Activated naive CD4-positive, alpha-beta T cell treated with anti-CD3 and anti-CD28 coated beads for 36 hours (primary cell): ENCODE measurements at regions of chr13 and their contacts with region 1.

Region 1: GRCh38 chr13:113208424-113209335 is at the start of gene PCID2:
- DNase-seq: peak; percentile 89
- H3K4me3 Mint-ChIP-seq: peak within 1 kb of the TSS; percentile 77
- H3K27ac Mint-ChIP-seq: peak within 1 kb of the TSS; percentile 81
- H3K4me1 Mint-ChIP-seq: peaks cover 55% of the 10 kb centered on the region
- H3K27me3 Mint-ChIP-seq: no peaks in the 10 kb centered on the region
- total RNA-seq, gene PCID2: 63.5 to 67.1 TPM

Region 2: GRCh38 chr13:112942689-112943308 is 265.9 kb before region 1 on chr13:
- CTCF ChIA-PET with region 1: no interaction called
- intact Hi-C with region 1: loop called (anchors 1 kb)
- DNase-seq: peak; percentile 99
- H3K4me3 Mint-ChIP-seq: peak overlapping the region; percentile 81
- H3K27ac Mint-ChIP-seq: no peak overlapping the region
- H3K4me1 Mint-ChIP-seq: peaks cover 7% of the 10 kb centered on the region
- H3K27me3 Mint-ChIP-seq: peaks cover 5% of the 10 kb centered on the region

Region 3: GRCh38 chr13:113138792-113139551 is 69.7 kb before region 1 on chr13:
- CTCF ChIA-PET with region 1: no interaction called
- intact Hi-C with region 1: no loop called
- DNase-seq: no peak
- H3K4me3 Mint-ChIP-seq: no peak overlapping the region
- H3K27ac Mint-ChIP-seq: no peak overlapping the region
- H3K4me1 Mint-ChIP-seq: no peaks in the 10 kb centered on the region
- H3K27me3 Mint-ChIP-seq: no peaks in the 10 kb centered on the region

Region 4: DNA sequence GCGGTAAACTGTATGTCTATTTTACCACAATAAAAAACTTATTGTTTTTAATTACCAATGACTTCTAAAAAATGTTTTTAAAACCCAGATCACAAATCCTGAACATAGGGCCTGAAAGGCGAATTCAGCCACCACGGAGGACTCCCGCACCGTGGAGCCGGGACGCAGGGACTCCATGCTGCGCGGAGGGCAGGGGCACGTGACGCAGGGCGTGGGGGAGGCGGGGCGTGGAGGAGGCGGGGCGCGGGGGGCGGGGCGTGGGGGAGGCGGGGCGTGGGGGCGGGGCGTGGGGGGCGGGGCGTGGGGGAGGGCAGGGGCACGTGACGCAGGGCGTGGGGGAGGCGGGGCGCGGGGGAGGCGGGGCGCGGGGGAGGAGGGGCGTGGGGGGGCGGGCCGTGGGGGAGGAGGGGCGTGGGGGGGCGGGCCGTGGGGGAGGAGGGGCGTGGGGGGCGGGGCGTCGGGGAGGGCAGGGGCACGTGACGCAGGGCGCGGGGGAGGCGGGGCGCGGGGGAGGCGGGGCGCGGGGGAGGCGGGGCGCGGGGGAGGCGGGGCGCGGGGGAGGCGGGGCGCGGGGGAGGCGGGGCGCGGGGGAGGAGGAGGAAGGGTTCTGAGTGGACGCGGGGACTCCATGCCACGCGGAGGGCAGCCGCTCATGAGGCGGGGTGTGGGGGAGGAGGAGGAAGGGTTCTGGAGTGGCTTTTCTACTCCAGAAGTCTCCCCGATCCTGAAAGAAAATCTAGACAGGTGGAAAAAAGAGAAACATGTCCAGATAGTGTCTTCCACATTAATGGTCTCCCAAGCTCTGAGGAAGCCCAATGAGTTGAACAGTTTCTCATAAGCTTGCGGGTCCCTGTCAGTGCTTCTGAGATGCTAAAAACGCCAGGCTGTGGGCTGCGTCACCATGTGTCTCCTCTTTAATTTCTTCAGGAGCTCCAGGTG is 54.6 kb before region 1 on chr13:
- CTCF ChIA-PET with region 1: no interaction called
- intact Hi-C with region 1: loop called (anchors 1 kb)
- DNase-seq: peak; percentile 68
- H3K4me3 Mint-ChIP-seq: peak overlapping the region; percentile 71
- H3K27ac Mint-ChIP-seq: peak overlapping the region; percentile 10
- H3K4me1 Mint-ChIP-seq: peaks cover 17% of the 10 kb centered on the region
- H3K27me3 Mint-ChIP-seq: peaks cover 4% of the 10 kb centered on the region

Region 5: GRCh38 chr13:113283904-113284303 is 75.2 kb after region 1 on chr13:
- CTCF ChIA-PET with region 1: no interaction called
- intact Hi-C with region 1: no loop called
- DNase-seq: no peak
- H3K4me3 Mint-ChIP-seq: no peak overlapping the region
- H3K27ac Mint-ChIP-seq: no peak overlapping the region
- H3K4me1 Mint-ChIP-seq: no peaks in the 10 kb centered on the region
- H3K27me3 Mint-ChIP-seq: peaks cover 7% of the 10 kb centered on the region

Region 6: DNA sequence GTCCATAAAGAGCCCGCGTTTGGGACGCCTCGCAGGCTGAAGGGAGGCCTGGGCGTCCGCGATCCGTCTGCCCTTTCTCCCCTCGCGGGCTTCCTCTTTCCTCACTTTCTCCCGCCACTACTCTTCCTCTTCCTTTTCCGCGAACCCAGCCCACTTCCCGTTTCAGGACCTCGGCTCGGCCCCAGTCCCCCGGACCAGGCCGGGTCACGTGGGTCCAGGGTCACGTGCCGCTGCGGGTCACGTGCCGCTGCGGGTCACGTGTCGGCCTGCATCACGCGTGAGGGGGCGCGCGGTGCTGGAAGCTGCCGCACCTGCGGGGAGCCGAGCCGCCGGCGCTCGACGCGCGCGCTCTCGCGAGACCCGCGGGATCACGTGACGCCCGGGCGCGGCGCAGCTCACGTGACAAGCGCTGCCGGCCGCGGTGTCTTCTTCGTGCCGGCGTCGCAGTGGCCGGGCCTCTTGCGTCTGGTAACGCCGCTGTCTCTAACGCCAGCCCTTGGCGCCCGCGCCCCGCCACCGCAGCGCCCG is 88.2 kb after region 1 on chr13 and contains the start of gene LAMP1:
- CTCF ChIA-PET with region 1: interaction called, 3 read pairs
- intact Hi-C with region 1: loop called (anchors 1 kb)
- DNase-seq: peak; percentile 97
- H3K4me3 Mint-ChIP-seq: peak within 1 kb of the TSS; percentile 91
- H3K27ac Mint-ChIP-seq: peak within 1 kb of the TSS; percentile 96
- H3K4me1 Mint-ChIP-seq: peaks cover 32% of the 10 kb centered on the region
- H3K27me3 Mint-ChIP-seq: peaks cover 10% of the 10 kb centered on the region
- total RNA-seq, gene LAMP1: 33.5 to 33.7 TPM

Region 7: DNA sequence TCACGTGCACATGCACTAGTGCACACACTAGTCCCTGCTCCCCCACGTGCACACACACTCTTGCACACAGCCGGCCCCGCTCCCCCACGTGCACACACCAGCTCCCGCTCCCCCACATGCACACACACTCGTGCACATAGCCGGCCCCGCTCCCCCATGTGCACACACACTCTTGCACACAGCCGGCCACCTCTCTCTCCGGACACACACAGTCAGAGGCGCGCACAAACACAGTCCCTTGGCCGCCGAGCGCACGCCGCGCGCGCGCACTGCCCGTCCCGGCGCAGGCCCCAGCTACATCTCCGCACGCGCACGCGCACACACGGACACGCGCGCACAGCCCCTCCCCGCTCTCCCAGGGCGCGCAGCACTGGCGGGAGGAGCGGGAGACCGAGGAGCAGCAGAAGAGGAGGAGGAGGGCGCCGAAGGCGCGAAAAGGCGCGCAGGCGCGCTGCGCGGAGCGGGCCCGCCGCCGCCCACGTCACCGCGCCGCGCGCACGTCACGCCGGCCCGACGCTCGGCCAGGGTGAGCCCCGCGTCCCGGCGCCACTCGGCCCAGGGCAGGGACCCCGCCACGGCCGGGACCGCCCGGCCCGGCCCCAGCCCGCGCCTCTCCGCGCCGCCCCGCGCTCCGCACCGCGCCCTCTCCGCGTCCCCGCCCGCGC is 375.7 kb after region 1 on chr13 and contains the start of gene TFDP1:
- CTCF ChIA-PET with region 1: no interaction called
- intact Hi-C with region 1: loop called (anchors 1 kb)
- DNase-seq: peak; percentile 84
- H3K4me3 Mint-ChIP-seq: peak within 1 kb of the TSS; percentile 93
- H3K27ac Mint-ChIP-seq: peak within 1 kb of the TSS; percentile 82
- H3K4me1 Mint-ChIP-seq: peaks cover 36% of the 10 kb centered on the region
- H3K27me3 Mint-ChIP-seq: no peaks in the 10 kb centered on the region
- total RNA-seq, gene TFDP1: 157 to 161 TPM